ENCODE measurements at regions of chr21 and their contacts with region 1.

Region 1: GRCh38 chr21:26850108-26850643 is 5.0 kb upstream of the ADAMTS1 start:
- DNase-seq: peak; percentile 52
- H3K4me3 Mint-ChIP-seq: no peak overlapping the region
- H3K27ac Mint-ChIP-seq: no peak overlapping the region
- H3K4me1 Mint-ChIP-seq: peaks cover 18% of the 10 kb centered on the region
- H3K27me3 Mint-ChIP-seq: peaks cover 29% of the 10 kb centered on the region
- CTCF ChIP-seq: peak; percentile 70

Region 2: GRCh38 chr21:27802816-27803475 is 952.8 kb after region 1 on chr21:
- CTCF ChIA-PET with region 1: no interaction called
- POLR2A ChIA-PET with region 1: no interaction called
- intact Hi-C with region 1: loop called (anchors 10 kb)
- DNase-seq: peak; percentile 53
- H3K4me3 Mint-ChIP-seq: no peak overlapping the region
- H3K27ac Mint-ChIP-seq: no peak overlapping the region
- H3K4me1 Mint-ChIP-seq: no peaks in the 10 kb centered on the region
- H3K27me3 Mint-ChIP-seq: no peaks in the 10 kb centered on the region
- CTCF ChIP-seq: peak; percentile 55